H1 (cell line): ENCODE measurements at regions of chr6 and their contacts with region 1.

Region 1: GRCh38 chr6:118283766-118284165 is 264.3 kb upstream of the PLN start:
- DNase-seq: no peak
- H3K4me3 ChIP-seq: no peak overlapping the region
- H3K27ac ChIP-seq: no peak overlapping the region
- H3K4me1 ChIP-seq: peaks cover 0 to 12% (median 5%) of the 10 kb centered on the region in 4 experiments; a peak in 4 of 7 replicates
- H3K27me3 ChIP-seq: no peaks in the 10 kb centered on the region
- CTCF ChIP-seq: peak in 2 of 3 experiments; percentile 64 to 71; a peak in 3 of 4 replicates
- EP300 ChIP-seq: no peak
- POLR2A ChIP-seq: no peak
- RAD21 ChIP-seq: peak; percentile 83 to 86

Region 2: GRCh38 chr6:118501765-118502164 is 218.0 kb after region 1 on chr6:
- CTCF ChIA-PET with region 1: interaction called, 13 read pairs
- POLR2A ChIA-PET with region 1: no interaction called
- DNase-seq: no peak
- H3K4me3 ChIP-seq: no peak overlapping the region
- H3K27ac ChIP-seq: no peak overlapping the region
- H3K4me1 ChIP-seq: no peaks in the 10 kb centered on the region
- H3K27me3 ChIP-seq: no peaks in the 10 kb centered on the region
- CTCF ChIP-seq: no peak
- EP300 ChIP-seq: no peak
- POLR2A ChIP-seq: no peak
- RAD21 ChIP-seq: no peak

Region 3: GRCh38 chr6:118524686-118525085 is 240.9 kb after region 1 on chr6:
- CTCF ChIA-PET with region 1: interaction called, 11 read pairs
- POLR2A ChIA-PET with region 1: no interaction called
- DNase-seq: no peak
- H3K4me3 ChIP-seq: no peak overlapping the region
- H3K27ac ChIP-seq: no peak overlapping the region
- H3K4me1 ChIP-seq: peaks cover 0 to 3% (median 0%) of the 10 kb centered on the region in 4 experiments; a peak in 1 of 7 replicates
- H3K27me3 ChIP-seq: no peaks in the 10 kb centered on the region
- CTCF ChIP-seq: no peak
- EP300 ChIP-seq: no peak
- POLR2A ChIP-seq: no peak
- RAD21 ChIP-seq: no peak

Region 4: DNA sequence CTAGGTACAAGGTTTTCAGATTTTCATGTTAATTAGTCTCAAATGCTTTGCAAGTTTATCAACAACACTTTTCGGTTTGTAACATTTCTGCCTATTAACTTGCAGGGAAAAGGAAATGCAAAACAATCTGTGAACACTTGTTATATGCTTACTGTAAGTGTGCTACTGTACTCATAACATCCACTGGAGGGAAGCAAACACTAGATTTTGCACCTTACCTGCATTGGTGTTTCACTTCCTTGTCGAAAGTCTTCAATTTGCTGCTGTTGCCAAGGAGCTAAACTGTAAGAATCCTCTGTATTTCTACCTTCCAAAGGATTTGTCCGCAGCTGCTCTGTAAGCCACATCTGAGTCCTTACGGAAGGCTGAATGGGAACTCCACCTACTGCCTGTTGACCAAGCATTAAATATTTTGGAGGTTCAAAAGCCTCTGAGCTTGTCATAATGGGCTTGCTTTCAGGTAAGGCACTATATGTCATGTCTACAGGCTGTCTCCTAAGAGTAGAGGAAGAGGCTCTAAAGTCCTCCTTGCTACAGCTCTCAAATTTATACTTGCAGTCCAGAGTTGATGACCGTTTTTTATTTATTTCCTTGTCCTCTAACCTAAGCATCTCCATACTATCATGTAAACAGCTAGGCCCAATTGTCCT is 281.7 kb after region 1 on chr6:
- CTCF ChIA-PET with region 1: interaction called, 15 read pairs
- POLR2A ChIA-PET with region 1: no interaction called
- DNase-seq: no peak
- H3K4me3 ChIP-seq: no peak overlapping the region
- H3K27ac ChIP-seq: no peak overlapping the region
- H3K4me1 ChIP-seq: peaks cover 0 to 7% (median 4%) of the 10 kb centered on the region in 4 experiments; a peak in 5 of 7 replicates
- H3K27me3 ChIP-seq: peaks cover 0 to 1% (median 0%) of the 10 kb centered on the region in 4 experiments; a peak in 1 of 7 replicates
- CTCF ChIP-seq: peak in 2 of 3 experiments; percentile 58 to 70; a peak in 3 of 4 replicates
- EP300 ChIP-seq: no peak
- POLR2A ChIP-seq: no peak
- RAD21 ChIP-seq: peak; percentile 81 to 83